CD4-positive, alpha-beta memory T cell (primary cell): ENCODE measurements at regions of chr7 and their contacts with region 1.

Region 1: DNA sequence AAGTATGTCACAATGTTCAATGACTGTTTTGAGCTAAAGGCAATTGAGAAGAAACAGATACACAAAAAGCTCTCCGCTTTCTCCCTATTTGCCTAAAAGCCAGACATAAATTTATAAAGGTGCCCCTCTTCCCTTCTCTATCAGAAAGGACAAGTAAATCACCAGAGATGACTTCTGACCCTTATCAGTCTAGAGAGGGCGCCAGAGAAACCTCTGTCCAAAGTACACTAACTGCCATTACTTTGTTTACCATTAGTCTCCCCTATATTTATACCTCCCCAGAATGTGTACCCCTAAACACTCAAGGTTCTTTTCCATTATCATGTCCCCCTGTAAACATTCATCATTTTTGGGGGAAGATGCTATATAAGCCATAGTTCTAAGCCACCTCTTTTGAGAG is 49.3 kb downstream of the TPK1 start:
- DNase-seq: peak in 3 of 5 donors; percentile 5 to 28 (median 6)
- H3K4me3 ChIP-seq: no peak overlapping the region
- H3K4me3 Mint-ChIP-seq: no peak overlapping the region
- H3K27ac ChIP-seq: no peak overlapping the region
- H3K27ac Mint-ChIP-seq: peak overlapping the region in 2 of 7 donors; percentile 49 to 67
- H3K4me1 ChIP-seq: no peaks in the 10 kb centered on the region
- H3K4me1 Mint-ChIP-seq: peaks cover 10 to 22% (median 17%) of the 10 kb centered on the region in 4 donors
- H3K27me3 ChIP-seq: no peaks in the 10 kb centered on the region
- H3K27me3 Mint-ChIP-seq: no peaks in the 10 kb centered on the region

Region 2: DNA sequence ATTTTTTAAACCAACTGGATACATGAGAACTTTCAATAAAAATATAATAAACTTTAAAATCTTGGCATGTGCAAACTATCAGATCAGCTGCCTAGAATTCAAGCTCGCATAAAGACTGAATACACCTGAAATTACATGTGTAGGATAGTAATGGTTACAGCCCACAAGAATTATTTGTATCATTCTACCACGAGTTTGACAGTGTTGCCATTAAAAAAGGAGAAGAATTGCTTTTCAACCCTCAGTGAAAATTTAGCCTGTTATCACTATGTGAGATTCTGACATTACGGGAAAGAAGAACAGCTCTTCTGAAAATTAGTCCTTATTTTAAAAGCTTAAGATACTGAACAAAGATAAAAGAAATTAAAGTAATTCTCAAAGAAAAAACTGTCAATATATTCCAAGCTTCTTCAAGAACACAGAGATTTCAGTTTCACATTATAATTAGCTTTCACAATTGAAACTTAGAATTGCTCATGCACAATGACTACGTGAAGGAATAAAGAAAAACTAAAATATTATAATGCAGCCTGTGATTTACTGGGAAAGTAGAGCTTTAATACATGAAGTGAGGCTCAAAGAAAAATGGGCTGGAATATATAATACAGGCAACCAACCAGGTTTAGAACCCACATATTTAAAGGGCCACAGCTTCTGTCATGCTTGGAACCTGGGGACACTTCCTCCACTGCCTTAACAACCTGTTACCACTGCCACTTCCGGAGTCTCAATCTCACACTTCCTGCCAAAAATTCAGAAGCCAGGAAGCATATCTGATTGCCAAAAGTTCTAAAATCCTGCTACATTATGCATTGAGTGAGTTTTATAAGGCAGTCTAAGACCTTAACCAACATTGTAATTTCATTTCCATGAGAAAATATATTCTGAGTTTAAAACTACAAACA is 26.1 kb after region 1 on chr7:
- CTCF ChIA-PET with region 1: interaction called, 20 read pairs
- POLR2A ChIA-PET with region 1: interaction called, 6 read pairs
- intact Hi-C with region 1: no loop called
- DNase-seq: peak; percentile 64 to 78 (median 72)
- H3K4me3 ChIP-seq: peak overlapping the region in 1 of 2 donors; percentile 2
- H3K4me3 Mint-ChIP-seq: peak overlapping the region; percentile 67 to 84 (median 78)
- H3K27ac ChIP-seq: peak overlapping the region; percentile 46
- H3K27ac Mint-ChIP-seq: peak overlapping the region; percentile 86 to 94 (median 93)
- H3K4me1 ChIP-seq: peaks cover 72% of the 10 kb centered on the region
- H3K4me1 Mint-ChIP-seq: peaks cover 45 to 78% (median 58%) of the 10 kb centered on the region in 4 donors
- H3K27me3 ChIP-seq: no peaks in the 10 kb centered on the region
- H3K27me3 Mint-ChIP-seq: no peaks in the 10 kb centered on the region

Region 3: GRCh38 chr7:144818511-144818910 is 32.0 kb after region 1 on chr7:
- CTCF ChIA-PET with region 1: interaction called, 6 read pairs
- POLR2A ChIA-PET with region 1: interaction called, 6 read pairs
- intact Hi-C with region 1: loop called (anchors 1 kb)
- DNase-seq: peak; percentile 72 to 88 (median 77)
- H3K4me3 ChIP-seq: peak overlapping the region in 1 of 2 donors; percentile 3
- H3K4me3 Mint-ChIP-seq: peak overlapping the region; percentile 46 to 84 (median 72)
- H3K27ac ChIP-seq: peak overlapping the region; percentile 54
- H3K27ac Mint-ChIP-seq: peak overlapping the region; percentile 80 to 99 (median 93)
- H3K4me1 ChIP-seq: peaks cover 67% of the 10 kb centered on the region
- H3K4me1 Mint-ChIP-seq: peaks cover 64 to 90% (median 72%) of the 10 kb centered on the region in 4 donors
- H3K27me3 ChIP-seq: no peaks in the 10 kb centered on the region
- H3K27me3 Mint-ChIP-seq: no peaks in the 10 kb centered on the region

Region 4: DNA sequence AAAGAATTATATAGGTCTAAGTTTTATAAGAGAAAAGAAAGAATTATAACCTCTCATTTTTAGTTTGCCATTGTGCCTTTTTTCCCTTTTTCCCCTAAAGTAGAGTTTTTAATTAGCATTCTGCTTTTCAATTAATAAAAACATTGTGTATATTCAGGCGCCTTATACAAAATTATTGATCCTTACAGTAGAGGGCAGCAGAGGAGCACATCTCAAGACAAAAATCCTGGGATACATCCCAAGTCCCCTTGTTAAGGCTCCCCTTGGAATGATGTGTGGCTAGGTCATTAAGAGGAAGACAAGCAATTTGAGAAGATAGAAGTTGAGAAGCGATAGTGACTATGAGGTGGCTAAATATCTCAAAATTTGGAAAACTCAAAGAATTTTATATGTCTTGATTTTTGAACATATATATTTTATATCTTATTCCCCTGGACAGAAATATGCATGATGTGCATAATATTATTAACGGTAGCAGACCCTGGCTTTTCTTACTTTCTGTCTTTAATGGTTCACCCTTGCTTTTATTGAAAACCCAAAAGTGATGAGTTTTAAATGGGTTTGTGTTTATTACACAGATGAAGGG is 68.4 kb after region 1 on chr7:
- CTCF ChIA-PET with region 1: interaction called, 21 read pairs
- POLR2A ChIA-PET with region 1: no interaction called
- intact Hi-C with region 1: loop called (anchors 2 kb)
- DNase-seq: no peak
- H3K4me3 ChIP-seq: no peak overlapping the region
- H3K4me3 Mint-ChIP-seq: no peak overlapping the region
- H3K27ac ChIP-seq: no peak overlapping the region
- H3K27ac Mint-ChIP-seq: no peak overlapping the region
- H3K4me1 ChIP-seq: no peaks in the 10 kb centered on the region
- H3K4me1 Mint-ChIP-seq: no peaks in the 10 kb centered on the region
- H3K27me3 ChIP-seq: no peaks in the 10 kb centered on the region
- H3K27me3 Mint-ChIP-seq: no peaks in the 10 kb centered on the region